ENCODE measurements at regions of chr1 and their contacts with region 1.

Region 1: DNA sequence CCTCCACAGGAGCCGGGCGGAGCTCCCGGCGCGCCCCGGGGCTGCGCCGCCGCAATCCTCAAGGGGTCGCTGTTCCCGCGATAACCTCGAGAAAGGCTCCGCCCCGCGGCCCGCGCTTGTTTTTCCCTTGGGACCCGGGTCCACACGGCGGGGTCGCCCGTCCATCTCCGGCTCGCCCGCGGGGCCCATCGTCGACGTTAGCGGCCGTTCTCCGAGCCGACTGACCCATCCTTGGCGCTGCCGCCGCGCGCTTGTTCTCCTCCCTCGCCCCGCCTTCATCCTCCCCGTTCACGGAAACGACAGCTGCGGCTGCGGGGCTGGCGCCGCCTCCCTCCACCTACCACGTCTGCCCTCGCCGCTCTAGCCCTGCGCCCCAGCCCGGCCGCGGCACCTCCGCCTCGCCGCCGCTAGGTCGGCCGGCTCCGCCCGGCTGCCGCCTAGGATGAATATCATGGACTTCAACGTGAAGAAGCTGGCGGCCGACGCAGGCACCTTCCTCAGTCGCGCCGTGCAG is at the start of gene SH3GLB1:
- DNase-seq: peak; percentile 78 to 92 (median 86)
- H3K4me3 ChIP-seq: peak within 1 kb of the TSS; percentile 66 to 98 (median 90)
- H3K27ac ChIP-seq: peak within 1 kb of the TSS; percentile 87 to 99 (median 98)
- H3K27me3 ChIP-seq: no peaks in the 10 kb centered on the region
- CTCF ChIP-seq: peak; percentile 67 to 99 (median 90)
- total RNA-seq, gene SH3GLB1: 46.5 to 81.9 (median 58.6) TPM

Region 2: GRCh38 chr1:86395771-86396497 is 308.6 kb before region 1 on chr1 and contains the start of gene ODF2L:
- intact Hi-C with region 1: loop called (anchors 10 kb)
- DNase-seq: peak; percentile 82 to 96 (median 94)
- H3K4me3 ChIP-seq: peak within 1 kb of the TSS; percentile 52 to 96 (median 90)
- H3K27ac ChIP-seq: peak within 1 kb of the TSS in 58 of 59 donors; percentile 0 to 91 (median 80)
- H3K27me3 ChIP-seq: no peaks in the 10 kb centered on the region
- CTCF ChIP-seq: peak in 20 of 56 donors; percentile 6 to 46 (median 15)
- total RNA-seq, gene ODF2L: 44.3 to 89.6 (median 67.4) TPM

Region 3: GRCh38 chr1:86515597-86515996 is 188.9 kb before region 1 on chr1:
- intact Hi-C with region 1: loop called (anchors 10 kb)
- DNase-seq: peak in 2 of 10 donors; percentile 59 to 67
- H3K4me3 ChIP-seq: no peak overlapping the region
- H3K27ac ChIP-seq: no peak overlapping the region
- H3K27me3 ChIP-seq: no peaks in the 10 kb centered on the region
- CTCF ChIP-seq: peak in 55 of 56 donors; percentile 31 to 96 (median 68)

Region 4: GRCh38 chr1:86687595-86687994 is 16.9 kb before region 1 on chr1:
- intact Hi-C with region 1: no loop called
- DNase-seq: no peak
- H3K4me3 ChIP-seq: no peak overlapping the region
- H3K27ac ChIP-seq: no peak overlapping the region
- H3K27me3 ChIP-seq: no peaks in the 10 kb centered on the region
- CTCF ChIP-seq: peak; percentile 18 to 84 (median 60)

Region 5: DNA sequence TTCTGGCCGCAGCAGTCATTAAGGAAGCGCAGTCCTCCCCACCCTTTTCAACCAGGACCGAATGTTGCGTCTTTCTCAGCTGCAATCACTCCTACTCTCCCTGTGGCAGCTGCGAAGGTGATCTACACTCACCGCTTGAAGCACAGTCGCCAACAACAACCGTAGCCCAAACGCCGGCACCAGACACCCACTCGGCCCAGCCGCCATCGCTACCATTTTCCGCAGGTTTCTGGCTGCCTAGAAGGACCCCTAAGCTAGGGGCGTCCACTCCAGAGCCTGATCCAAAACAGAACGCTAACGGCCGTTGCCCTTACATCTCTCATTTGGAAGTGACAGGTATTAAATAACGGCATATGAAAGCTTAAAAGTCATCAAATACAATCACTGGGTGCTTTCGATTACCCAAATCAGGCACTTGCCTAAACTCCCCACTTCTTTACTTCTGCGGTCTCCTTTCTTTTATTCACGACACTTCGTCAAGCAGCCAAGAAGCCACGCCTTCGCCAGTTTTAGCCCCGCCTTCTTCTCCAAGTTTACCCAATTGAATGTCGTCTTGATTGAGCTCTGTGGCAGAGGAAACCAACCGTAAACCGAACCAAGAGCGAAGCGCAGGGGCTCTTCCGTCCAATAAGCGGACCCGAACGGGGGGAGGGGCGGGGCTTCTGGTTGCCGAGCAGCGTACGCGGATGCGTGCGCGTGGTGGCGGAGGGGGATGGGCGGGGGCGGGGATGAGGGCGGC is 209.6 kb after region 1 on chr1 and contains the start of gene SELENOF:
- intact Hi-C with region 1: loop called (anchors 10 kb)
- DNase-seq: peak; percentile 94 to 99 (median 98)
- H3K4me3 ChIP-seq: peak within 1 kb of the TSS; percentile 61 to 99 (median 89)
- H3K27ac ChIP-seq: peak within 1 kb of the TSS; percentile 59 to 98 (median 93)
- H3K27me3 ChIP-seq: no peaks in the 10 kb centered on the region
- CTCF ChIP-seq: peak in 11 of 56 donors; percentile 5 to 34 (median 9)
- total RNA-seq, gene SELENOF: 81.1 to 146 (median 111) TPM

Region 6: DNA sequence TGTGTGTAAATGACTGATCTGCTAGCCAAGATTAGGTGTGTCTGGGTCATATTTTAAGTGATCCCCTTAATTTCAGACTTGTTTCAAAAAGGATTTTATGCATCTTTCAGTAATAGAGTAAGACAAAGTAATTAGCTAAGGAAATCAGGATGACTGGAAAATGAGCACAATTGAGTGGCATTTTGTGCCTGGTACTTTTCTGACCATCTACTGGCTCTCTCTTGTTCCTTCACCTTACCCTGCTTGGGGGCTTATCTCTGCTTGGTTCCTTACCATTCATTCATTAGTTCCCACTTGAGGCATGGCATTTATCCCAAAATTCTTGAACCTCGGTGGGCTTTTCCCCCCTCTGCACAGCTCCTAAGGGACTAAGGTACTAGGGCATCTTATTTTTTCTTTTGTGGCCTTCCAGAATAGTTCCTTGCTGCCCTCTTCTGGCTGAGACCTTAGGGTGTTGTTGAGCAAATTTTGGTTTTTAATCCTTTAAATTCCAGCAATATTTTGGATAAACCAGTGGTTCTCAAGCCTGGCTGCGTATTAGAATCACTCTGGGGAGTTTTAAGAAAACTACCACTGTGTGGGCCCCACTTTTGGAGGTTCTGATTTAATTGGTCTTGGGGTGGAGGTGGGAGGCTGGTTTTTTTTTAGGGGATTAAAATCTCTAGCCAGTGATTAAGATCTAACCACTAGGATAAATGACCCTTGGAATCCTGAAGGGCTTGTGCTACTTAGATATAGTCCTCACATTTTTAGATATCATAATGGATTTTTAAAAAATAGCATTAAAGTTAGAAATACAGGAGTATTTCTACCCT is 260.7 kb after region 1 on chr1:
- intact Hi-C with region 1: loop called in 1 of 2 experiments (anchors 10 kb)
- DNase-seq: no peak
- H3K4me3 ChIP-seq: no peak overlapping the region
- H3K27ac ChIP-seq: no peak overlapping the region
- H3K27me3 ChIP-seq: no peaks in the 10 kb centered on the region
- CTCF ChIP-seq: peak in 55 of 56 donors; percentile 15 to 77 (median 59)

Region 7: DNA sequence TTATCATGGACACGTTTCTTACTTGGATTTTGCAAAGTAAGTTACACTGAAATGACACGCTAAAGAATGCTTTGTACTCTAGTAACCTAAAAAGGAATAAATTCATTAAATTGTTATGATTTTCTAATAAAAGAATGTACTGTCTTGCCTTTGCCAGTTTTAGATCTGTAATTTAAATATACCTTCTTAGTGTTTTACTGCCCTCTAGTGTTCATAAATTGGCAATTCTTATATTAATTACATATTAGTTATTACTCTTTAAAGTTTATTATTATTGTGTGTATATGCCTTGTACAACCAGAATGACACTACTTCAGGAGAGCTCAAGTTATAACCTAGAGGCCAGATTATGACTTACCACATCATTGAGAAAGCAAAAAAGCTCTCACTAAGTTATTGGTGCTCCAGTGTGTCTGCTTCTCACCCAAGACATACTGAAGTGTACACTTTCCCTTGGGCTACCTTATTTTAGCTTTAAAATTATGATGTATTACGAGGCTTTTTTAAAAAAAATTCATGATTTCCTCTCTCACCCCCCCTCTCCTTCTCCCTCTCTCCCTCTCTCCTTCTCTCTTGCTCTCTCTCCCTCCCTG is 379.8 kb after region 1 on chr1:
- intact Hi-C with region 1: loop called in 1 of 2 experiments (anchors 10 kb)
- DNase-seq: no peak
- H3K4me3 ChIP-seq: no peak overlapping the region
- H3K27ac ChIP-seq: no peak overlapping the region
- H3K27me3 ChIP-seq: no peaks in the 10 kb centered on the region
- CTCF ChIP-seq: peak; percentile 38 to 85 (median 66)